AG04450 (cell line): ENCODE measurements at regions of chr7 and their contacts with region 1.

Region 1: GRCh38 chr7:135672560-135673359 is 10.4 kb downstream of the STMP1 start:
- DNase-seq: peak; percentile 58
- H3K4me3 ChIP-seq: no peak overlapping the region
- H3K27ac ChIP-seq: no peak overlapping the region
- H3K27me3 ChIP-seq: no peaks in the 10 kb centered on the region
- CTCF ChIP-seq: peak; percentile 89

Region 2: GRCh38 chr7:135620980-135621850 is 51.5 kb before region 1 on chr7:
- CTCF ChIA-PET with region 1: interaction called, 12 read pairs
- POLR2A ChIA-PET with region 1: interaction called, 3 read pairs
- DNase-seq: peak; percentile 75
- H3K4me3 ChIP-seq: no peak overlapping the region
- H3K27ac ChIP-seq: no peak overlapping the region
- H3K27me3 ChIP-seq: no peaks in the 10 kb centered on the region
- CTCF ChIP-seq: peak; percentile 89

Region 3: GRCh38 chr7:135662373-135663114 is 10.2 kb before region 1 on chr7 and contains the start of gene STMP1:
- CTCF ChIA-PET with region 1: interaction called, 55 read pairs
- POLR2A ChIA-PET with region 1: interaction called, 8 read pairs
- DNase-seq: peak; percentile 86
- H3K4me3 ChIP-seq: peak within 1 kb of the TSS; percentile 93
- H3K27ac ChIP-seq: peak within 1 kb of the TSS; percentile 98
- H3K27me3 ChIP-seq: no peaks in the 10 kb centered on the region
- CTCF ChIP-seq: peak; percentile 70
- polyA plus RNA-seq, gene STMP1: 39.3 and 48.2 TPM in 2 replicates

Region 4: GRCh38 chr7:135684136-135684535 is 11.4 kb after region 1 on chr7:
- CTCF ChIA-PET with region 1: interaction called, 44 read pairs
- POLR2A ChIA-PET with region 1: no interaction called
- DNase-seq: no peak
- H3K4me3 ChIP-seq: no peak overlapping the region
- H3K27ac ChIP-seq: peak overlapping the region; percentile 24
- H3K27me3 ChIP-seq: no peaks in the 10 kb centered on the region
- CTCF ChIP-seq: no peak

Region 5: GRCh38 chr7:135690566-135690965 is 17.8 kb after region 1 on chr7:
- CTCF ChIA-PET with region 1: interaction called, 44 read pairs
- POLR2A ChIA-PET with region 1: no interaction called
- DNase-seq: peak; percentile 23
- H3K4me3 ChIP-seq: no peak overlapping the region
- H3K27ac ChIP-seq: no peak overlapping the region
- H3K27me3 ChIP-seq: no peaks in the 10 kb centered on the region
- CTCF ChIP-seq: no peak

Region 6: GRCh38 chr7:135710417-135711138 is 37.8 kb after region 1 on chr7:
- CTCF ChIA-PET with region 1: interaction called, 34 read pairs
- POLR2A ChIA-PET with region 1: no interaction called
- DNase-seq: no peak
- H3K4me3 ChIP-seq: no peak overlapping the region
- H3K27ac ChIP-seq: no peak overlapping the region
- H3K27me3 ChIP-seq: no peaks in the 10 kb centered on the region
- CTCF ChIP-seq: peak; percentile 48

Region 7: GRCh38 chr7:136009488-136010079 is 336.8 kb after region 1 on chr7:
- CTCF ChIA-PET with region 1: interaction called, 45 read pairs
- POLR2A ChIA-PET with region 1: no interaction called
- DNase-seq: peak; percentile 13
- H3K4me3 ChIP-seq: no peak overlapping the region
- H3K27ac ChIP-seq: no peak overlapping the region
- H3K27me3 ChIP-seq: no peaks in the 10 kb centered on the region
- CTCF ChIP-seq: peak; percentile 70